ENCODE measurements at regions of chr2 and their contacts with region 1.

Region 1: GRCh38 chr2:197777823-197778407 is 7.2 kb downstream of the BOLL start:
- DNase-seq: no peak
- ATAC-seq: no peak

Region 2: DNA sequence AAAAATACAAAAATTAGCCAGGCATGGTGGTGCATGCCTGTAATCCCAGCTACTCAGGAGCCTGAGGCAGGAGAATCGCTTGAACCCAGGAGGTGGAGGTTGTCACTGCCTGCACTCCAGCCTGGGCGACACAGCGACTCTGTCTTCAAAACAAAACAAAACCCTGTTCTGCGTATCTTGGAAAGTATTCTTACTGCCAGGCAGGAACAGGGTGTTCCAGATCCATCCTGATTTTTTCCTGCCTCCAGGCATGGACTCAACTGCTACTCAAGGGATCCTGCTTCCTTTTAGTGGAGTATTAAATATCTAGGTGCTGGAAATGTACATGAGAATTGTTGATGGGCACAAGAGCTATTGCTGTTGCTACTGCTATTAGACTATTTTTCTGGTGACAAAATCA is 290.5 kb before region 1 on chr2:
- intact Hi-C with region 1: no loop called
- DNase-seq: no peak
- ATAC-seq: no peak

Region 3: GRCh38 chr2:197705121-197705911 is 72.6 kb before region 1 on chr2 and contains the start of gene MARS2:
- intact Hi-C with region 1: loop called in 1 of 2 experiments (anchors 5 kb)
- DNase-seq: peak; percentile 91 to 96
- ATAC-seq: peak; percentile 93
- total RNA-seq, gene MARS2: 9.5 to 15.7 TPM

Region 4: GRCh38 chr2:198028955-198029354 is 251.0 kb after region 1 on chr2:
- intact Hi-C with region 1: no loop called
- DNase-seq: no peak
- ATAC-seq: no peak

Measured in left colon (tissue), 2 donors.